ENCODE measurements at regions of chr4 and their contacts with region 1.

Region 1: GRCh38 chr4:87235020-87235671 is 14.7 kb upstream of the KLHL8 start:
- DNase-seq: no peak
- ATAC-seq: no peak
- H3K4me3 ChIP-seq: peak overlapping the region in 1 of 2 donors; percentile 45
- H3K4me3 Mint-ChIP-seq: peak overlapping the region; percentile 62 to 78 (median 75)
- H3K27ac ChIP-seq: no peak overlapping the region
- H3K27ac Mint-ChIP-seq: no peak overlapping the region
- H3K4me1 ChIP-seq: peaks cover 0 to 4% of the 10 kb centered on the region in 2 experiments
- H3K4me1 Mint-ChIP-seq: peaks cover 0 to 9% (median 0%) of the 10 kb centered on the region in 3 donors
- H3K27me3 ChIP-seq: no peaks in the 10 kb centered on the region
- H3K27me3 Mint-ChIP-seq: no peaks in the 10 kb centered on the region

Region 2: GRCh38 chr4:87144356-87144755 is 90.8 kb before region 1 on chr4:
- CTCF ChIA-PET with region 1: interaction called, 3 to 12 read pairs
- POLR2A ChIA-PET with region 1: no interaction called
- DNase-seq: no peak
- ATAC-seq: no peak
- H3K4me3 ChIP-seq: no peak overlapping the region
- H3K4me3 Mint-ChIP-seq: no peak overlapping the region
- H3K27ac ChIP-seq: no peak overlapping the region
- H3K27ac Mint-ChIP-seq: peak overlapping the region in 1 of 2 donors; percentile 7
- H3K4me1 ChIP-seq: no peaks in the 10 kb centered on the region
- H3K4me1 Mint-ChIP-seq: peaks cover 0 to 2% (median 0%) of the 10 kb centered on the region in 3 donors
- H3K27me3 ChIP-seq: no peaks in the 10 kb centered on the region
- H3K27me3 Mint-ChIP-seq: no peaks in the 10 kb centered on the region

Region 3: DNA sequence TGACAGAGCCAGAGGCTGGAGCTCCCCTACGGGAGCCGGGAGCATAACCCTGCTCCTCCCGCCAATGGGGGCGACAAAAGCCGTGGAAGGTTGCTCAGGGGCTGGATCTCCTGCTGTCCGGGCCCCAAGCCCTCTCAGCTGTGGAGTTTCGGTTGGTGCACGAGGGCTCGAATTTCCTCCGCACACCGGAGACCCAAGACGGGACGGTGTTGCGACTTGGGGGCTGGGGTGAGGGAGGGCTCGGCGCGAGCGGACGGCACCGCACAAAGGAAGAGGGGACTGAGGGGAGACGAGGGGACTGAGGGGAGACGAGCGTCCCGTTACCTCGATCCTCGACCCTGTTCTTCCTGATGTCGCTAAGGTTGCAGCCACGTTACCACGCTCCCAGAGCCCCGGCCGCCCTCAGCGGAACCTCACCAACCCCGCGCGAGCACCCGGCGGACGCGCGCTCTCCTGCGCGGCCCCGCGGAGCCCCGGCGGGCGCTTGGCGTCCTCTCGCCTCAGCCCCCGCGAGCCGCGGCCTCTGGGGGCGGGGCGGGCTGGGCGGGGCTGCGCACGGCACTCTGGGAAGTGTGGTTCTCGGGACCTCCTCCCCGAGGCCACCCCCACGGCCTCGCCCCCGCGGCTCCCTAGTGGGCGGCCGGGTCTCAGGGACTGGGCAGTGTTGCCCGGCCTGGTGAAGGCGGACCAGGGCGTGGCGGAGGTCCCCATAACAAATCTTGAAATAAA is 14.9 kb before region 1 on chr4 and contains the start of gene KLHL8:
- CTCF ChIA-PET with region 1: interaction called, 11 read pairs
- POLR2A ChIA-PET with region 1: interaction called in 1 of 2 experiments, 3 read pairs
- DNase-seq: peak; percentile 74 to 93 (median 84)
- ATAC-seq: peak; percentile 86 to 93 (median 88)
- H3K4me3 ChIP-seq: peak within 1 kb of the TSS; percentile 65 to 96
- H3K4me3 Mint-ChIP-seq: peak within 1 kb of the TSS; percentile 91 to 92 (median 91)
- H3K27ac ChIP-seq: peak within 1 kb of the TSS; percentile 71
- H3K27ac Mint-ChIP-seq: peak within 1 kb of the TSS; percentile 91 to 92
- H3K4me1 ChIP-seq: peaks cover 2 to 17% of the 10 kb centered on the region in 2 experiments
- H3K4me1 Mint-ChIP-seq: peaks cover 20 to 27% (median 23%) of the 10 kb centered on the region in 3 donors
- H3K27me3 ChIP-seq: no peaks in the 10 kb centered on the region
- H3K27me3 Mint-ChIP-seq: no peaks in the 10 kb centered on the region
- total RNA-seq, gene KLHL8: 8.5 to 11.8 (median 9.8) TPM

Region 4: GRCh38 chr4:89069481-89069880 is 1834.3 kb after region 1 on chr4:
- CTCF ChIA-PET with region 1: no interaction called
- POLR2A ChIA-PET with region 1: no interaction called
- DNase-seq: no peak
- ATAC-seq: no peak
- H3K4me3 ChIP-seq: no peak overlapping the region
- H3K4me3 Mint-ChIP-seq: no peak overlapping the region
- H3K27ac ChIP-seq: no peak overlapping the region
- H3K27ac Mint-ChIP-seq: peak overlapping the region in 1 of 2 donors; percentile 29
- H3K4me1 ChIP-seq: no peaks in the 10 kb centered on the region
- H3K4me1 Mint-ChIP-seq: peaks cover 0 to 6% (median 3%) of the 10 kb centered on the region in 3 donors
- H3K27me3 ChIP-seq: no peaks in the 10 kb centered on the region
- H3K27me3 Mint-ChIP-seq: peaks cover 3 to 5% of the 10 kb centered on the region in 2 donors

Measured in T-cell (primary cell).